Activated T-helper 2 cell treated with anti-CD3 and anti-CD28 coated beads, Interferon-gamma antibody, Interleukin-2, Interleukin-4, amounts not matched to agents 10 μg/mL and 5 μg/mL and 100 μg/mL, durations not matched to agents 14 hours and 24 hours and 36 hours (primary cell): ENCODE measurements at regions of chr22 and their contacts with region 1.

Region 1: GRCh38 chr22:50244420-50245213 is at the start of gene TUBGCP6:
- DNase-seq: peak; percentile 92
- H3K4me3 Mint-ChIP-seq: peak within 1 kb of the TSS; percentile 100
- H3K27ac Mint-ChIP-seq: peak within 1 kb of the TSS; percentile 100
- H3K4me1 Mint-ChIP-seq: peaks cover 12% of the 10 kb centered on the region
- H3K27me3 Mint-ChIP-seq: no peaks in the 10 kb centered on the region
- total RNA-seq, gene TUBGCP6: 48.8 and 49.6 TPM in 2 replicates

Region 2: DNA sequence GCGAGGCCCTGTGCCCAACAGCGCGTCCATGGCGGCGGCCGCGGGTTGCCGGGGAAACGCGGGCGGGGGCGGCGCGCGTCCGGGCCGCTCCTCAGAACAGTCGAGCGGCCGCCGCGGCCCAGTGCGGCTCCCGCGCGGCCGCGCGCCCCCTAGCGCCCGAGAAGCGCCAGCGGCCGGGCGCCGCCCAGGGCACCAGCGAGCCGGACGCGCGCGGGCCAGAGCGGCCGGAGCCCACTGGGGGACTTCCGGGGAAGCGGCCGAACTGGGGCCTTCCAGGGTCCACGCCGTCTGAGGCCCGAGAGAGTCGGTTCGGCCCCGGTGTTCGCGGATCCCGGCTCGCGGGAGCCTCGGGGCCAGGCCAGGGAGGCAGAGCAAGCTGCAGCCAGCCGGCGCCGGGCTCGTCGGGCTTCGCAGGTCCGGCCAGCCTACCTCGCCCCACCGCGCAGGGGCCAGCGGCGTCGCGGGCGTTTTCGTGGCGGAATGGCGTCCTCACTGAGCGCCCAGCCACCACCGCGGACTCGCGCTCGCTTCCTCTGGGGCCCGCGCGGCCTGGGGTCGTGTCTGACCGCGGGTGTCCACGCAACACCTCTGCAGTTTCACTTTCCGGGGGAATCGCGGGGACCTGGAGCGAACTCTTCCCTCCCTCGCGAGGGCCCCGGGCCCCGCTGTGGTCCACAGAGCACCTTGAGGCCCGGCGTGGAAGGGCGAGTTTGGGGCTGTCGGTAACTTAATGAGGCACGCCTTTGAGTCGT is 82.5 kb after region 1 on chr22 and contains the start of gene DENND6B:
- intact Hi-C with region 1: loop called (anchors 5 kb)
- DNase-seq: peak; percentile 61
- H3K4me3 Mint-ChIP-seq: peak within 1 kb of the TSS; percentile 84
- H3K27ac Mint-ChIP-seq: peak within 1 kb of the TSS; percentile 86
- H3K4me1 Mint-ChIP-seq: peaks cover 12% of the 10 kb centered on the region
- H3K27me3 Mint-ChIP-seq: peaks cover 18% of the 10 kb centered on the region
- total RNA-seq, gene DENND6B: 2.3 and 2.7 TPM in 2 replicates

Region 3: GRCh38 chr22:50498322-50498890 is 253.8 kb after region 1 on chr22:
- intact Hi-C with region 1: loop called (anchors 1 kb)
- DNase-seq: peak; percentile 61
- H3K4me3 Mint-ChIP-seq: no peak overlapping the region
- H3K27ac Mint-ChIP-seq: no peak overlapping the region
- H3K4me1 Mint-ChIP-seq: peaks cover 1% of the 10 kb centered on the region
- H3K27me3 Mint-ChIP-seq: no peaks in the 10 kb centered on the region